Dorsolateral prefrontal cortex (tissue), 120 donors: ENCODE measurements at regions of chr12 and their contacts with region 1.

Region 1: GRCh38 chr12:56189176-56189917 is at the start of gene SMARCC2:
- DNase-seq: peak; percentile 56 to 88 (median 75)
- H3K4me3 ChIP-seq: peak within 1 kb of the TSS; percentile 68 to 93 (median 82)
- H3K27ac ChIP-seq: peak within 1 kb of the TSS; percentile 49 to 95 (median 88)
- H3K27me3 ChIP-seq: no peaks in the 10 kb centered on the region
- CTCF ChIP-seq: peak; percentile 35 to 83 (median 66)
- total RNA-seq, gene SMARCC2: 144 to 252 (median 196) TPM

Region 2: DNA sequence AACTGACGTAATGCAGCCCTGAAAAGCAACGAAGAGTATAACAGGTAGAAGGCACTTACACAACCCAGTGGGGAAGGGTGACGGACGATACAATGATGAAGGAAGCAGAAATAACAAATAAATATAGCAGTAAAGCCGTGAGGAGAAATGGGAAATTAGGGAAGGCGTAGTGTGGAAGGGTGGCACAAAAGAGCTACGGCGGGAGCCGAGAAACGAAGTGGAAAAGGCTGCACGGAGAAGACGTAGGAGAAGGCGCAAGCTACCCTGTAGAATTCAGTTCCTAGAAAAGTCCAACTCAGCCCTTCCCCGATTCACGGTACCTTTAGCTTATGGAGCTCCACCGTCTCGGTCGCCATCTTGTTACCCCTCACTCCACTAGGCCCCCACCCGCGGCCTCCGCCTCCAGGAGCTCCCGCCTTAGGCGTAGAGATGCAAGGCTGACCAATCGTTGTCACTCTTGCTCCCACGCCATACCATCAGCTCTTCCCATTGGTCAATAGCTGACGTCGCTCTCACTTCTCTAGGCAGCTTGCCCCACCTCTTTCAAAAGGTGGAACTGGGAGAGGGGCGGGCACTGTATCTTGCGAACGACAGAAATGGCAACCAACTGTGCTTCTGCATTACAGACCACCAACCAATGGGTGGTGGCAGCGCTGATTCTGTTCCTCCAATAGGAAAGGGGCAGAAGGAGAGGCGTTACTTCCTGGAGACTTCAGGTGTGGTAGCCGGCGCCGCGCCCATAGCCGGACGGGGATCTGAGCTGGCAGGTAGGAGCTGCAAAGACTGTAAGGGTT is 371.8 kb before region 1 on chr12 and contains the starts of genes ORMDL2 and SARNP:
- intact Hi-C with region 1: no loop called
- DNase-seq: peak; percentile 92 to 100 (median 99)
- H3K4me3 ChIP-seq: peak within 1 kb of the TSS; percentile 56 to 100 (median 93)
- H3K27ac ChIP-seq: peak within 1 kb of the TSS in 58 of 59 donors; percentile 56 to 94 (median 87)
- H3K27me3 ChIP-seq: no peaks in the 10 kb centered on the region
- CTCF ChIP-seq: peak in 17 of 56 donors; percentile 4 to 37 (median 15)
- total RNA-seq, gene ORMDL2: 5.9 to 21.8 (median 11.6) TPM
- total RNA-seq, gene SARNP: 26.4 to 54.1 (median 39.1) TPM

Region 3: GRCh38 chr12:56127888-56128669 is 61.3 kb before region 1 on chr12 and contains the start of gene ESYT1:
- intact Hi-C with region 1: loop called in 1 of 2 experiments (anchors 2 kb)
- DNase-seq: peak; percentile 81 to 99 (median 98)
- H3K4me3 ChIP-seq: peak within 1 kb of the TSS; percentile 63 to 98 (median 85)
- H3K27ac ChIP-seq: peak within 1 kb of the TSS; percentile 38 to 93 (median 84)
- H3K27me3 ChIP-seq: no peaks in the 10 kb centered on the region
- CTCF ChIP-seq: peak in 43 of 56 donors; percentile 3 to 63 (median 34)
- total RNA-seq, gene ESYT1: 32.5 to 86.2 (median 56.5) TPM

Region 4: GRCh38 chr12:56158029-56158925 is 31.1 kb before region 1 on chr12 and contains the start of gene MYL6:
- intact Hi-C with region 1: loop called (anchors 2 kb)
- DNase-seq: peak; percentile 92 to 100 (median 98)
- H3K4me3 ChIP-seq: peak within 1 kb of the TSS; percentile 60 to 95 (median 85)
- H3K27ac ChIP-seq: peak within 1 kb of the TSS; percentile 67 to 97 (median 92)
- H3K27me3 ChIP-seq: no peaks in the 10 kb centered on the region
- CTCF ChIP-seq: peak in 6 of 56 donors; percentile 4 to 21 (median 7)
- total RNA-seq, gene MYL6: 295 to 716 (median 377) TPM

Region 5: DNA sequence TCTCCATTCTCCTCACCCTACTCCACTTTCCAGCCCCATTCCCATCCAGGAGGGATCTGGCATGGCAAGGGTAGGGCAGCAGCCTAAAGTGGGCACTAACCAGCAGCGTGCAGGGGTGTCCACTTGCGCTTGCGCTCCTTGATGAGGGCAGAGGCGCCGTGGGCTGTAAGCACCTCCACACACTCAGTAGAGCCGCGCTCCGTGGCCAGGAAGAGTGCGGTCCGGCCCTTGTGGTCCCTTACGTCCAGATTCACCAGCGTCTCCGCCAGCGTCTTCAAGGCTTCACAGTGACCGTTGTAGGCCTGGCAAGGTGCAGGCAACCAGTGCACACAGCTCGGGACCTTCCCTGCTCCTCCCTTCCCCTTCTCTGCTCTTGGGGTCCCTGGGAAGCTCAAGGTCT is 58.6 kb after region 1 on chr12:
- intact Hi-C with region 1: no loop called
- DNase-seq: no peak
- H3K4me3 ChIP-seq: no peak overlapping the region
- H3K27ac ChIP-seq: no peak overlapping the region
- H3K27me3 ChIP-seq: no peaks in the 10 kb centered on the region
- CTCF ChIP-seq: no peak

Region 6: DNA sequence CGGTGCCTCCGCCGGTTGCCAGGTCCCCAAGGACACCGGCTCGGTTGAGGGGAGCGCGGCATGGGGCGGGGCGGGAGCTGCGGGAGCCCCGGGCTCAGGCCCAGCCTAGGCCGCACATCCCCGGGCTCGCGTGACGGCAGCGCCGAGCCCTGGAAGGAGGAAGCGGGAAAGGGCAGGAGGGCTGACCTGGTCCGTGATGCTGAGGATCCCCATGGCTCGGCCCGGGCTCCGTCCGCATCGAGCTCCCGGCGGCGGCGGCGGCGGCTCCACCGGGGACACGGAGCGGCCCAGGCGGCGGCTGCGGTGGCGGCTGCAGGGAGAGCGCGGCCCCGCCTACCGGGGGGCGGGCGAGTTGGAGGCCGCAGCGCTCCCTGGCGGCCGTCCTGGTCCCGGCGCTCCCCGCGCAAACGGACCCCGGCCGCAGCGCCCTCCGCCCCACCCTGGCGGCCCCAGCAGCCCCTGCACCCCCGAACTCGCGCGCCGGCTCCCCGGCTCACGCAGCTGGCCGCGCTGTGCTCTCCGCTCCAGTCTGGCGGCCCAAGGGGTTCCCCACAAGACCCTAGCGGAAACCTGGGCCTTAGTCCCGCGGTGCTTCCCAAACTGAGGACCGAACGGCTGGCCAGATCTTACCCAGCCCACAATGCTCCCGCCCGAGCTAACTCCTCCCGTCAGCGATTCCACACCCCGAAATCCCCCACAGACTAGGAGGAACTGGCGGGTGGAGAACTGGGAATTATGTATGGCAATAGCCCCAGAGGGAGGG is 68.9 kb after region 1 on chr12 and contains the start of gene ANKRD52:
- intact Hi-C with region 1: loop called in 1 of 2 experiments (anchors 5 kb)
- DNase-seq: peak; percentile 48 to 85 (median 71)
- H3K4me3 ChIP-seq: peak within 1 kb of the TSS; percentile 62 to 98 (median 91)
- H3K27ac ChIP-seq: peak within 1 kb of the TSS; percentile 24 to 94 (median 88)
- H3K27me3 ChIP-seq: no peaks in the 10 kb centered on the region
- CTCF ChIP-seq: peak in 54 of 56 donors; percentile 13 to 96 (median 70)
- total RNA-seq, gene ANKRD52: 32.7 to 75.7 (median 55.2) TPM

Region 7: GRCh38 chr12:56474409-56474808 is 285.1 kb after region 1 on chr12:
- intact Hi-C with region 1: loop called (anchors 5 kb)
- DNase-seq: no peak
- H3K4me3 ChIP-seq: no peak overlapping the region
- H3K27ac ChIP-seq: no peak overlapping the region
- H3K27me3 ChIP-seq: no peaks in the 10 kb centered on the region
- CTCF ChIP-seq: no peak